Panc1 (cell line): ENCODE measurements at regions of chr14 and their contacts with region 1.

Region 1: DNA sequence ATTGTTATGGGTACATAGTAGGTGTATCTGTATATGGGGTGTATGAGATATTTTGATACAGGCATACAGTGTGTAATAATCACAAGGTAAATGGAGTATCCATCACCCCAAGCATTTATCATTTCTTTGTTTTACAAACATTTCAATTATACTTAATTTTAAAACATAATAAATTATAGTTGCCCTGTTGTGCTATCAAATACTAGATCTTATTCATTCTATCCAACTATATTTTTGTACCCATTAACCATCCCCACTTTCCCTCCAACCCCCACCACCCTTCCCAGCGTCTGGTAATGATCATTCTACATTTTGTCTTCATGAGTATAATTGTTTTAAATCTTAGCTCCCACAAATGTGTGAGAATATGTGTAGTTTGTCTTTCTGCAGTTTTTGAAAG is 302.6 kb downstream of the FOXG1 start:
- DNase-seq: no peak
- ATAC-seq: no peak
- H3K4me3 ChIP-seq: no peak overlapping the region
- H3K27ac ChIP-seq: no peak overlapping the region
- H3K4me1 ChIP-seq: no peaks in the 10 kb centered on the region
- H3K27me3 ChIP-seq: no peaks in the 10 kb centered on the region
- CTCF ChIP-seq: no peak

Region 2: DNA sequence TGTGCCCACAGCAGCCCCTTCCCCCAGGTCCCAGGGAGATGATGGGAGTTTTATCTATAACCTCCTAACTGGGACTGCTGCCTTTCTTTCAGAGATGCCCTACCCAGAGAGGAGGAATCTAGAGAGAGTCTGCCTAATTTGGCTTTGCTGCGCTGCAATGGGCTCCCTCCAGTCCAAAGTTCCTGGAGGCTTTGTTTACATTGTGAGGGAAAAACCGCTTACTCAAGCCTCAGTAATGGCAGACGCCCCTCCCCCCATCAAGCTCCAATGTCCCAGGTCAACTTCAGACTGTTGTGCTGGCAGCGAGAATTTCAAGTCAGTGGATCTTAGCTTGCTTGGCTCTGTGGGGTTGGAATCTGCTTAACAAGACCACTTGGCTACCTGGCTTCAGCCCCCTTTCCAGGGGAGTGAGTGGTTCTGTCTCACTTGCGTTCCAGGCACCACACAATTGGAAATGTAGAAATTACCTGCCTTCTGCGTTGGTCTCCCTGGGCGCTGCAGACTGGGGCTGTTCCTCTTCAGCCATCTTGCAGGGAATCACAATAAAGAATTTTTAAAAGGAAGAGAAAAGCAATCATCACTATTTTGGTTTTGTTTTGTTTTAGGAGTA is 40.1 kb before region 1 on chr14:
- CTCF ChIA-PET with region 1: no interaction called
- POLR2A ChIA-PET with region 1: no interaction called
- in situ Hi-C with region 1: no loop called
- intact Hi-C with region 1: loop called (anchors 2 kb)
- DNase-seq: no peak
- ATAC-seq: no peak
- H3K4me3 ChIP-seq: no peak overlapping the region
- H3K27ac ChIP-seq: no peak overlapping the region
- H3K4me1 ChIP-seq: no peaks in the 10 kb centered on the region
- H3K27me3 ChIP-seq: no peaks in the 10 kb centered on the region
- CTCF ChIP-seq: no peak